CD4-positive, alpha-beta T cell (primary cell): ENCODE measurements at regions of chr1 and their contacts with region 1.

Region 1: GRCh38 chr1:229227298-229227919 is 43.5 kb upstream of the RAB4A start:
- DNase-seq: peak; percentile 69 to 90 (median 81)
- ATAC-seq: peak; percentile 84
- H3K4me3 ChIP-seq: no peak overlapping the region
- H3K4me3 Mint-ChIP-seq: no peak overlapping the region
- H3K27ac ChIP-seq: no peak overlapping the region
- H3K27ac Mint-ChIP-seq: no peak overlapping the region
- H3K4me1 ChIP-seq: peaks cover 13% of the 10 kb centered on the region
- H3K4me1 Mint-ChIP-seq: peaks cover 17% of the 10 kb centered on the region
- H3K27me3 ChIP-seq: no peaks in the 10 kb centered on the region
- H3K27me3 Mint-ChIP-seq: no peaks in the 10 kb centered on the region
- CTCF ChIP-seq: peak; percentile 96

Region 2: DNA sequence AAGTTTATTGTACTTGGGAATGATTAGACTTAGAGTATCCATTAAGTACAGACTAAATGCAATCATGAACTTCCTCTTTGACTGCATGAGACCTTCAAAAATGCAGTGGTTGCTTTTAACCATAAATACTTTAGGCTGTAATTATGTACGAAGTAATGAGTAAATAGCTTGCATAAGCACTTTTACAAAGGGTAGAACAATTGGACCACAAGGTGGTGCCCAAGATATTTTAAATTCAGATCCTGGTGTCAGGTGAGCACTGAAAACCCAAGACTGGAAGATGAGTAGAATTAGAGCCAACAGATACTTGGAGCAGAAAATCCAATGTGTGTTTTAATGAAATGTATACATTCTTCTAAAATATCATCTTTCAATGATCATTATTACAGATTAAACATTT is 535.5 kb before region 1 on chr1:
- CTCF ChIA-PET with region 1: interaction called, 7 read pairs
- POLR2A ChIA-PET with region 1: no interaction called
- intact Hi-C with region 1: loop called (anchors 1 to 5 kb)
- DNase-seq: peak in 6 of 14 experiments; percentile 3 to 73 (median 55)
- ATAC-seq: peak; percentile 51
- H3K4me3 ChIP-seq: no peak overlapping the region
- H3K4me3 Mint-ChIP-seq: no peak overlapping the region
- H3K27ac ChIP-seq: no peak overlapping the region
- H3K27ac Mint-ChIP-seq: no peak overlapping the region
- H3K4me1 ChIP-seq: peaks cover 10% of the 10 kb centered on the region
- H3K4me1 Mint-ChIP-seq: peaks cover 13% of the 10 kb centered on the region
- H3K27me3 ChIP-seq: no peaks in the 10 kb centered on the region
- H3K27me3 Mint-ChIP-seq: no peaks in the 10 kb centered on the region
- CTCF ChIP-seq: peak; percentile 48

Region 3: GRCh38 chr1:228734881-228735801 is 492.3 kb before region 1 on chr1 and contains the start of gene RHOU:
- CTCF ChIA-PET with region 1: interaction called, 4 read pairs
- POLR2A ChIA-PET with region 1: interaction called, 12 read pairs
- intact Hi-C with region 1: loop called (anchors 1 kb)
- DNase-seq: peak; percentile 35 to 86 (median 60)
- ATAC-seq: peak; percentile 85
- H3K4me3 ChIP-seq: peak within 1 kb of the TSS; percentile 74
- H3K4me3 Mint-ChIP-seq: peak within 1 kb of the TSS; percentile 92
- H3K27ac ChIP-seq: no peak within 1 kb of the TSS
- H3K27ac Mint-ChIP-seq: peak within 1 kb of the TSS; percentile 81
- H3K4me1 ChIP-seq: peaks cover 28% of the 10 kb centered on the region
- H3K4me1 Mint-ChIP-seq: peaks cover 28% of the 10 kb centered on the region
- H3K27me3 ChIP-seq: no peaks in the 10 kb centered on the region
- H3K27me3 Mint-ChIP-seq: peaks cover 2% of the 10 kb centered on the region
- CTCF ChIP-seq: peak; percentile 36
- total RNA-seq, gene RHOU: 1.2 TPM